Activated CD8-positive, alpha-beta memory T cell treated with anti-CD3 and anti-CD28 coated beads, Interleukin-2, amount 10 ng/mL, durations not matched to agents 7 days and 5 days (primary cell): ENCODE measurements at regions of chr16 and their contacts with region 1.

Region 1: DNA sequence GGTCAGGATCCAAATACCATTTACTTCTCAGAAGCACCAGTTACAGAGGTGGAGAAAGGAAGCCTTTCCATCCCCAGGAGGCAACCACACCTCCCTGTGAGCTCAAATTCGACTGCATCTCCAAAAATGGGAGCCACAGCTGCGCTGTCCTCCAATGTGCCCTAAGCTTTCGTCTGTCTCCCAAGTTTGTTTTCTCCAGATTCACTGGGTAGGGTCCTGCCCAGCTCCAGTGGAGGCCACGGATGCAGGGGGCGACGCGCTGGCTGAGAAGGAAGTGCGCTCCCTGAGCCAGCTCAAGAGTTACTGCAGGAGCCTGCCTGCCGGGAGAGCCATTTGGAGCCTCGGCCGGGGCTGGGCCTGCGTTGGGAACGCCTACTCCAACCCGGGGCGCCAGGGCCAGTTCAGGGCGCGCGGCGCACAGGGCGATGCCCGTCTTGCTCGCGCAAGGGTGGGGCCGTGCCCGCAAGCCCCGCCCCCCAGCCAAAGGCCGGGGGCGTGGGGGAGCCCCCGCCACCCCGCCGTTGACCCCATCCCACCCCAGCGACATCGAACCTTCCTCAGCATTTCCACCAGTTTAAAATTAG is 19.5 kb downstream of the SIAH1 start:
- DNase-seq: peak; percentile 91
- ATAC-seq: peak; percentile 99
- H3K4me3 Mint-ChIP-seq: peak overlapping the region; percentile 97
- H3K27ac Mint-ChIP-seq: peak overlapping the region; percentile 99
- H3K4me1 Mint-ChIP-seq: peaks cover 38% of the 10 kb centered on the region
- H3K27me3 Mint-ChIP-seq: no peaks in the 10 kb centered on the region

Region 2: GRCh38 chr16:48321317-48322036 is 44.2 kb before region 1 on chr16:
- CTCF ChIA-PET with region 1: no interaction called
- DNase-seq: no peak
- ATAC-seq: no peak
- H3K4me3 Mint-ChIP-seq: no peak overlapping the region
- H3K27ac Mint-ChIP-seq: no peak overlapping the region
- H3K4me1 Mint-ChIP-seq: peaks cover 25% of the 10 kb centered on the region
- H3K27me3 Mint-ChIP-seq: no peaks in the 10 kb centered on the region

Region 3: DNA sequence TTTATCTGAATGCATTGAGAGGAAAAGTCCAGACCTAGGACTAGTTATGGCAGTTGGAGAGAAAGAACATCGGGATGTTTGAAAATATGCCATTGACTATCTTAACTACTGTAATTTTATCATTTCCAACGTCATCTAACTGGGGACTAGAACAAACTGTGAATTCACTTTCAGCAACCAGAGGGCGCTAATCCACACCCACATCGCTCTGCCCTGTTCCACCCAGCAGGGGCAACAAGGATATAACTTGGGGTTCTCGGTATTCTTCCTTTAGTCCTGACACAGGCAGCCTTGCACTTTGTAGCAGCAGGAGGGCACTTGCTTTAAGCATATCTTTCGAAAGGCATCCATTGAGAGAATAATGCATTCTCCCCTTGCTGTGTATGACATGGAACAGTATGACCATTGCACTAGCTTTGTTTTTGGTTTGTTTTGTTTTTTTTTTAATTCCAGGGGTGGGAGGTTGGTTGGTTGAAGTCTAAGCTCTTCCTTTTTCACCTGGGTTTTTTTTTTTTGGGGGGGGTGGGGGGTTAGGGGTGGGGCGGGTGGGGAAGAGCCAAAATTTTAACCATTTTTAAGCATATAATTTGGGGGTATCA is 12.0 kb before region 1 on chr16:
- CTCF ChIA-PET with region 1: interaction called, 36 read pairs
- DNase-seq: peak; percentile 80
- ATAC-seq: peak; percentile 95
- H3K4me3 Mint-ChIP-seq: no peak overlapping the region
- H3K27ac Mint-ChIP-seq: peak overlapping the region; percentile 36
- H3K4me1 Mint-ChIP-seq: peaks cover 12% of the 10 kb centered on the region
- H3K27me3 Mint-ChIP-seq: no peaks in the 10 kb centered on the region

Region 4: DNA sequence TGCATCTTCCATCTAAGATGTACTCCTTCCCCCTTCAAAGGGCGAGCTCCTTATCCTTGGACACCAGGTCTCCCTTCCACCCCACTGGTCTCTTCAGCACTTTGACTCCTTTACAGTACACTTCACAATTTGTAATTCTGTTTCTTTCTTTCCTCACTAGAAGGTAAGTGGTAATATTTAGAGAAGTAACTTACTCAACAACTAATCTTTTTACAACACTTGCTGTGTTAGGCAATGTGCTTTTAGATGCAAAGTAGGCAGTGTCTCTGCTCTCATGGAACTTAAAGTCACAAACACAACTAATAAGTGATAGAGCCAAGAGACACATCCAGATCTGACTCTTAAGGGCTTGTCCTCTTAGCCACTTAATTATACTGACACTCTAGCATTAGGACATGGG is 13.2 kb after region 1 on chr16:
- CTCF ChIA-PET with region 1: interaction called, 19 read pairs
- DNase-seq: no peak
- ATAC-seq: no peak
- H3K4me3 Mint-ChIP-seq: no peak overlapping the region
- H3K27ac Mint-ChIP-seq: no peak overlapping the region
- H3K4me1 Mint-ChIP-seq: peaks cover 40% of the 10 kb centered on the region
- H3K27me3 Mint-ChIP-seq: no peaks in the 10 kb centered on the region

Region 5: GRCh38 chr16:48385272-48386150 is 19.8 kb after region 1 on chr16 and contains the start of gene SIAH1:
- CTCF ChIA-PET with region 1: interaction called, 12 read pairs
- DNase-seq: peak; percentile 87
- ATAC-seq: peak; percentile 84
- H3K4me3 Mint-ChIP-seq: peak within 1 kb of the TSS; percentile 85
- H3K27ac Mint-ChIP-seq: peak within 1 kb of the TSS; percentile 86
- H3K4me1 Mint-ChIP-seq: peaks cover 21% of the 10 kb centered on the region
- H3K27me3 Mint-ChIP-seq: no peaks in the 10 kb centered on the region
- total RNA-seq, gene SIAH1: 15.5 to 17.6 TPM

Region 6: GRCh38 chr16:48556913-48557351 is 191.3 kb after region 1 on chr16:
- CTCF ChIA-PET with region 1: no interaction called
- DNase-seq: peak; percentile 63
- ATAC-seq: peak; percentile 89
- H3K4me3 Mint-ChIP-seq: no peak overlapping the region
- H3K27ac Mint-ChIP-seq: peak overlapping the region; percentile 82
- H3K4me1 Mint-ChIP-seq: peaks cover 78% of the 10 kb centered on the region
- H3K27me3 Mint-ChIP-seq: no peaks in the 10 kb centered on the region